Posterior vena cava (tissue), 2 donors: ENCODE measurements at regions of chr1 and their contacts with region 1.

Region 1: GRCh38 chr1:243354511-243355153 is 98.8 kb downstream of the SDCCAG8 start:
- DNase-seq: no peak

Region 2: DNA sequence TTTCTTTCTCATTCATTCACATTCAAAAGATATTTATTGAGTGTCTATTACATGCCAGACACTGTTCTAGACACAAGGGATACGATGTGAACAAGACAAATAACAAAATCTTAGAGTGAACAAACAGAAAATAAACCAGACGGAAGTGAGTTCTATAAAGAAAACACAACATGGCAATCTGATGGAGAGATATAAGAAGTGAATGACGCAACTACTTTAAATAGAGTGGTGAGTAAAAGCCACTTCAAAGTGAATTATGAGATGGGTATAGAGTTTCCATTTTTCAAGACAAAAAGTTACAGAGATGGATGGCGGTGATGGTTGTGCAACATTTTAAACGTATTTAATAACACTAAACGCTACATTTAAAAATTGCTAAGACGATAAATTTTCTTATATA is 174.9 kb before region 1 on chr1:
- intact Hi-C with region 1: no loop called
- DNase-seq: no peak

Region 3: DNA sequence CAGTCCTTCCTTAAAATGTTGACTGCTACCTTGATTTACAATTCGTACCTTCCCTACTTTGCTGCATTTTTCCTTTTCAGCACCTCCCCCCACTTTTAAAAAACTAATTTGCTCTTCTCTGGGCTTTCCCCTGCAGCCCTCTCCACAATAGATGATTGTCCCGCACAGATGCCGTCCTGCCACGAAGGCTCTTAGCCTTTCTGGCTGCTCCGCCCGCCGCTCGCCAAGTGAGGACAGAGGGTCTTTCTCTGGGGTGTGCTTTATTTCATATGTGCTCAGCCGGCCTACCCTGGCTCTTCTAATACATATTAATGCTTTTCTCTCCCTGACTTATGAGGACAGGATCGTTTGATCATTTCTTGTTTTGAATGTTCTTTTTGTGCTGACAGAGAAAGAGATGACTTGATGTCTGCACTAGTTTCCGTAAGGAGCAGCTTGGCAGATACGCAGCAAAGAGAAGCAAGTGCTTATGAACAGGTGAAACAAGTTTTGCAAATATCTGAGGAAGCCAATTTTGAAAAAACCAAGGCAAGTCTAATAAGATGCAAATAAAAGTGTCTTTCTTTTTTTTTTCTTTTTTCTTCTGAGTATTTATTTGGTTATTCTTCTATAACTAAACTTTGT is 38.2 kb before region 1 on chr1:
- intact Hi-C with region 1: loop called in 1 of 2 experiments (anchors 2 kb)
- DNase-seq: no peak

Region 4: GRCh38 chr1:243378669-243379068 is 24.0 kb after region 1 on chr1:
- intact Hi-C with region 1: no loop called
- DNase-seq: no peak

Region 5: DNA sequence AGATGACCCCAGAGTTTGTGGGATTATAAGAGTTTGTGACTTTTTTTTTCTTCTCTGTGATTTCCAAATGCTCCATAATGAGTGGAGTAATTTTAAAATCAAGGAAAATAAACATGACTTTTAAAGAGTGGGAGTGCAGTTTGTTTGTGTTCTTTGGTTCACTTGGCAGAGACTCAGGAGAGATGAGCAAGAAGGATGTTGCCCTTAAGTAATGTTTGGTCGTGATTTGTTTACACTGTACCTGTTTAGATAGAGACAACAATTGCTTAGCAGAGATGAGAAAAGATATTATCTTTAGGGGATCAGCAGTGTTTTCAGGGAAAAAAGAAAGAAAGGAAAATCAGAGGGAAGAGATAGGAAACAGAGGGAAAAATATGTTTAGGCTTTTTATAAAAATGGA is 926.2 kb after region 1 on chr1:
- intact Hi-C with region 1: loop called in 1 of 2 experiments (anchors 10 kb)
- DNase-seq: no peak